ENCODE measurements at regions of chr7 and their contacts with region 1.

Region 1: DNA sequence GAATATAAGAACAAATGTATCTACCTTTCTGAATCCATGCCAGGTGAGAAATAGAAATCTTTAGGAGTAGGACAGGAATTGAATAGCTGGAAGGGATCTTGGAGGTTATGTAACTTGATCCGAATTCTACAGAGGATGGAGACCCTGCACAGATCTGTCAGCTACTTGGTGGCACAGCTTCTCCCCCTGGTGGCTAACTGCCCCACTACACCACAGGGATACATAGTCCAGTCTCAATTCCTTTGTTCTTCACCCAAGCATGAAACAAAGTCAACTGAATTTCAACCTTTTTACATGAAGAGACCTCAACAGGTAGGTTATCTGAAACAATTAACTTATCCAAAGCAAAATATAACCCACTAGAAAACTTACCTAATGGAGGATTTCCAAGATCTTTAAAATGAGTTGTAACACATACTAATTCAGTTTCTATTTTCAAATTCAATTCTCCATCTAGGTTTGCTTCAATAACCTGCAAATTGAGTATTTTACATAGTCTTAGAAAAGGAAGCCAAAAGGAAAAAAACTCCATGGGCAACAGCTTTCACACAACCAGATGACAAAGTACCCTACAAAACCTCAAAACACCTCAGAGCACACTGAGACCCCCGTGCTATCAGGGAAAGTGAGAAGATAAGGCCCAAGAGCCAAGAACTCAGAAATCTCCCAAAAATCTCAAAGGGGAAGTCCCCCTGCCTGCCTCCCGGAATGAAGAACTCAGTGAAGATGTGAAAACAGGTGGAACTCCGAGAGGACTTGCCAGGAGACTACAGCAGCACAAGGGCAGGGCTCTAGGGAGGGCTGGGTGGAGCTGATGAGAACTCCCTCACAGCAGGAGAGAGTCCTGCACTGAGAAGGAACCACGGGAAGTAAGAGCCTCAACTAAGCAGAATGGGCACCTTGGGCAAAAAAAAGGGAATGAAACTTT is 10.3 kb downstream of the HUS1 start:
- DNase-seq: peak; percentile 73
- CTCF ChIP-seq: peak; percentile 79

Region 2: DNA sequence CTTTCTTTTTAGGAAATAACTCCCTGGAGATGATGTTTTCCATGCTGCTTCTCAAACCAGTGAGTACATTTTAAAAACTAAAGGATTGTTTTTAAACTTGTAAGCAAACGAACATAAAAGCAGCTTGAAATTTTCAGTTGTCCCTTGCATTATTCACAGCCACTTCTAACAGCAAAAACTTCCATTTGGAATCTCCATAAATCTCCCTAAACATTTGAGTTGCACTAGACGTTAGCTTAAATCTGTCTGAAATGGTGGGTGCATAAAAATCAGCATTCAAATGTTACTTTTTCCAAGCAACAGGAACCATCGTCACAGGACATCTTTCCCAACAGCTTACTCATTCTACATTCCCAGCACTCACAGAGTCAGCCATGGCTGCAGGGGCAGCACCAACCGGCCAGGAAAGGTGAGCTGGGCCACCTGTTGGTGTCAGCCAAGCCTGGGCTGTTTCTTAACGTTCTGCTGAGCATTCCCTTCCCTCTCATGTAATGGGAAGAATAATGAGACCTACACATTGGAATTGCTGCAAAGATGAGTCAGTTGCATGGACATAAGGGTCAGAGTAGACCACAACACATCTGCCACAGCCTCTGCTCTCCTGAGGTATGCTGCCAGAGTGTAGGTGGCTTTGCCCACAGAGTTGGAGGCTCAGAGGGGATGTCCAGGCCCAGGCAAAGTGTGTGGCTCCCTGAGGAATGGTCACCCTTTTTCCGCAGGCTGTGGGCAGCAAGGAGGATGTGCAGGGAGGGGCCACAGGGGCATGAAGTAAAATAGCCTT is 550.3 kb before region 1 on chr7:
- CTCF ChIA-PET with region 1: no interaction called
- POLR2A ChIA-PET with region 1: no interaction called
- DNase-seq: no peak
- CTCF ChIP-seq: no peak

Region 3: DNA sequence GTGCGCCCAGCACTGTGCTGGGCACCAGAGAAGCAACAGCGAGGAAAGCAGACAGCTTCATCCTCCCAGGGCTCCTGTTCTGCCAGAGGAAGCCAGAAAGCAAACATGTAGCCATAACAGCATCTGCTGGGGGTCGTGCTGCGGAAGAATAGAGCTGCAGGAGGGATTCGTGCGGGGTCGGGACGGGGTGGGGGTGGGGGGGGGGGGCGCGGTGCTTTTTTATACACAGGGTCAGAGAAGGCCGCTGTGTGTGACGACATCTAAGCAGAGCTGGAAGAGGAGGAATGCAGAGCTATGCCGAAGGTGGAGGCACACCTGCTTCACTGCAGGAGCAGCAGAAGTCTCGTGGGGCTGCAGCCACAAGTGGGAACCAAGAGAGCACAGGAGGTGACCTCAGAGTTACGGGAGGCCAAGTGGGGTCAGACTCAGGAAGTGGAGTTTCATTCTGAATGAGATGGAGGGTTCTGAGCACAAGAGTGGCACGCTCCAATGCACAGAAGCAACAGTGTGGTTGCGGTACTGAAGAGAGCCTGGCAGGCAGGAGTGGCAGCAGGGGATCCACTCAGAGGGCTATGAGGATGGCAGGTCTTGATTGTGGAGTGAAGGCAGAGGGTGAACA is 31.9 kb before region 1 on chr7:
- CTCF ChIA-PET with region 1: interaction called, 23 read pairs
- POLR2A ChIA-PET with region 1: no interaction called
- DNase-seq: peak; percentile 90
- CTCF ChIP-seq: no peak

Region 4: DNA sequence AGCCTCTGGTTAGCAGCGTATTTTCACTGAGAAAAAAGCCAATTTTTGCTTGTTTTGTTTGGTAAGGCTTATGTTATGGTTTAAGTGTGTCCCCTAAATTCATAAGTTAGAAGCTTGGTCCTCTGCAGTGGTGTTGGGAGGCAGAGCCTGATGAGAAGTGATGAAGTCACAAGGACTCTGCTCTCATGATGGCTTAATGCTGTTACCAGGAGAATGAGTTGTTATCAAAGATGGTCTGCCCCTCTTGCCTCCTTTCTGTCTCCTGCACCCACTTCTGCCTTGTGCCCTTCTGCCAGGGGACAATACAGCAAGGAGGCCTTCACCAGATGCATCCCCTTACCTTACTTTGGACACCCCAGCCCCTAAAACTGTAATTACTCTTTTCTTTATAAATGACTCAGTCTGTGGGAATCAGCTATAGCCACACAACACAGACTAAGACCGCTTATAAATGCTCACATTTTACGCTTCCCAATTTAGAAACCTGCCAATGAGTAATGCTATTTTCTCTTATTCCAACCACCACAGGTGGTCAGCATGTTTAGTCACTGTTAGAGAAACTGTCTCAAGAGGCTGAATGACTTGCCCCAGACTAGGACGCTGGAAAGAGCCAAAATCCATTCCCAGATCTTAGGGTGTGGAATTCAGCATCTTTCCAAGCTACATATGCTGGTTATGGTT is 14.7 kb before region 1 on chr7:
- CTCF ChIA-PET with region 1: interaction called, 101 read pairs
- POLR2A ChIA-PET with region 1: no interaction called
- DNase-seq: no peak
- CTCF ChIP-seq: no peak

Region 5: GRCh38 chr7:47979145-47979831 is 10.2 kb after region 1 on chr7 and contains the start of gene HUS1:
- CTCF ChIA-PET with region 1: interaction called, 12 read pairs
- POLR2A ChIA-PET with region 1: interaction called, 3 read pairs
- DNase-seq: peak; percentile 93
- CTCF ChIP-seq: no peak

Region 6: GRCh38 chr7:47991741-47992311 is 22.7 kb after region 1 on chr7:
- CTCF ChIA-PET with region 1: interaction called, 12 read pairs
- POLR2A ChIA-PET with region 1: no interaction called
- DNase-seq: peak; percentile 92
- CTCF ChIP-seq: peak; percentile 80

Region 7: GRCh38 chr7:48004638-48005037 is 35.5 kb after region 1 on chr7:
- CTCF ChIA-PET with region 1: no interaction called
- POLR2A ChIA-PET with region 1: no interaction called
- DNase-seq: peak; percentile 48
- CTCF ChIP-seq: no peak